IMR-90 (cell line): ENCODE measurements at regions of chr1 and their contacts with region 1.

Region 1: GRCh38 chr1:941588-942383 is 17.3 kb downstream of the NOC2L start:
- DNase-seq: peak; percentile 51
- ATAC-seq: peak; percentile 42
- H3K4me3 ChIP-seq: peak overlapping the region; percentile 42
- H3K27ac ChIP-seq: peak overlapping the region; percentile 43
- H3K4me1 ChIP-seq: peaks cover 52% of the 10 kb centered on the region
- H3K27me3 ChIP-seq: no peaks in the 10 kb centered on the region
- CTCF ChIP-seq: no peak
- POLR2A ChIP-seq: no peak
- RAD21 ChIP-seq: no peak

Region 2: GRCh38 chr1:912740-913301 is 29.0 kb before region 1 on chr1:
- CTCF ChIA-PET with region 1: no interaction called
- POLR2A ChIA-PET with region 1: no interaction called
- dilution Hi-C with region 1: no loop called
- in situ Hi-C with region 1: no loop called
- intact Hi-C with region 1: loop called (anchors 1 kb)
- DNase-seq: no peak
- ATAC-seq: no peak
- H3K4me3 ChIP-seq: no peak overlapping the region
- H3K27ac ChIP-seq: no peak overlapping the region
- H3K4me1 ChIP-seq: peaks cover 22% of the 10 kb centered on the region
- H3K27me3 ChIP-seq: no peaks in the 10 kb centered on the region; the same call in 1 of the 2 replicates
- CTCF ChIP-seq: no peak
- POLR2A ChIP-seq: no peak
- RAD21 ChIP-seq: no peak

Region 3: DNA sequence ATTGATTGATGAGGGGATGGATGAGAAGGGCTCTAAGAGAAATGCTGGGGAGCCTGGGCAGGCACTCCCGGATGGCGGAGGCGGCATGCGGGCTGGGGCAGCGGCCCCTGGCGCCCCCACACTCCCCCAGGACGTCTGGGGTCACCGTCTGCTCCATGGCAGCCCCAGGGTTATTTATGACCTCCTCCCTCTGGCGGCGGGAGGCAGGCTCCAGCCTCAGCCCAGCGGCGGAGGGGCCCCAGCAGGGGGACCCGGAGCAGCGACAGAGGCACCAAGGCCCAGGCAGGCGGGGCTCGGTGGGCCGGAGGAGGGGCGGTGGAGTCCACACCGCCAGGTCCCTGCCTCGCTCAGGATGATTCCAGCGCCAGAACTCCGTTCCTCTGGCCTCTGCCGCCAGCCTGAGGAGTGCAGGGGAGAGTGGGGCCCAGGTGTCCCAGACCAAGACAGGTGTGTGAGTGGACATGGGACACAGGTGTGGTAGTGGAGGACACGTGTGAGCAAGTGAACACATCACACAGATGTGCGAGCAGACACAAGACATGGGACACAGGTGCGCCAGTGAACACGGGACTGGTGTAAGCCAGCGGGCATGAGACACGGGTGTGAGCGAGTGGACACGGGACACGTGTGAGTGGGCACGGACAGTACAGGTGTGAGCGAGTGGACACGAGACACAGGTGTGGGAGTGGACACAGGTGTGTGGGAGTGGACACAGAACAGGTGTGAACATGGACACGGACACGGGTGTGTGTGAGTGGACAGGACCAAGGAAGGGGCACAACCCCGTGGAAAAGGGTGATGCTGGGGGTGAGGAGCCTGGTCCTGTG is 20.6 kb before region 1 on chr1:
- CTCF ChIA-PET with region 1: interaction called, 3 read pairs
- POLR2A ChIA-PET with region 1: no interaction called
- dilution Hi-C with region 1: no loop called
- in situ Hi-C with region 1: no loop called
- intact Hi-C with region 1: loop called (anchors 2 kb)
- DNase-seq: peak; percentile 71
- ATAC-seq: peak; percentile 64
- H3K4me3 ChIP-seq: no peak overlapping the region
- H3K27ac ChIP-seq: no peak overlapping the region; the same call in 1 of the 2 replicates
- H3K4me1 ChIP-seq: peaks cover 23% of the 10 kb centered on the region
- H3K27me3 ChIP-seq: no peaks in the 10 kb centered on the region; the same call in 1 of the 2 replicates
- CTCF ChIP-seq: peak; percentile 51
- POLR2A ChIP-seq: no peak
- RAD21 ChIP-seq: peak; percentile 36; the same call in 1 of the 2 replicates